Pancreas (tissue), 10 donors: ENCODE measurements at regions of chr15 and their contacts with region 1.

Region 1: GRCh38 chr15:97915261-97915660 is 45.2 kb upstream of the ARRDC4 start:
- DNase-seq: no peak
- ATAC-seq: no peak
- H3K4me3 ChIP-seq: no peak overlapping the region
- H3K27ac ChIP-seq: no peak overlapping the region
- H3K4me1 ChIP-seq: no peaks in the 10 kb centered on the region
- H3K27me3 ChIP-seq: no peaks in the 10 kb centered on the region
- CTCF ChIP-seq: no peak

Region 2: GRCh38 chr15:98085003-98085639 is 169.9 kb after region 1 on chr15:
- intact Hi-C with region 1: loop called in 1 of 3 experiments (anchors 10 kb)
- DNase-seq: peak in 3 of 6 donors; percentile 23 to 57 (median 33)
- ATAC-seq: peak in 3 of 4 donors; percentile 51 to 63 (median 62)
- H3K4me3 ChIP-seq: no peak overlapping the region
- H3K27ac ChIP-seq: no peak overlapping the region
- H3K4me1 ChIP-seq: no peaks in the 10 kb centered on the region
- H3K27me3 ChIP-seq: no peaks in the 10 kb centered on the region
- CTCF ChIP-seq: peak; percentile 19 to 60 (median 46)